CD4-positive, alpha-beta T cell (primary cell): ENCODE measurements at regions of chr13 and their contacts with region 1.

Region 1: DNA sequence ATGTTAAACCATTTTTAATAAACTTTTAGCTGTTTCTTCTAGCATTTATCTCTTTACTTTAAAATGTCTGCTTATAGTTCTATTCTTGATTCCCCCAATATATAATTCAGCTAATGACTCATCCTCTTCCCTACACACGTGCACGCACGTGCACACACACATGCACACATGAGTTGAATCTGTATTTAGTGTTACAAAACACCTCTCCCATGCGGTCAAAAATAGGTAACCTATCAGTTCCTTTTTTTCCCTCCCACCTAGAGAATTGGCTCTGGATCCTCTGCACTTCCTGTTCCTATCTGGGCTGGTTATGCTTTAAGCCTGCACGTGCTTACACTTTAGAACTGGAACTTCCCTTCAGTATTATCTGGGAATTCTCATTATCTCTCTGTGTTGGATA is 144.1 kb downstream of the PAN3 start:
- DNase-seq: no peak
- ATAC-seq: no peak
- H3K4me3 ChIP-seq: no peak overlapping the region
- H3K4me3 Mint-ChIP-seq: no peak overlapping the region
- H3K27ac ChIP-seq: no peak overlapping the region
- H3K27ac Mint-ChIP-seq: no peak overlapping the region
- H3K4me1 ChIP-seq: no peaks in the 10 kb centered on the region
- H3K4me1 Mint-ChIP-seq: no peaks in the 10 kb centered on the region
- H3K27me3 ChIP-seq: no peaks in the 10 kb centered on the region
- H3K27me3 Mint-ChIP-seq: no peaks in the 10 kb centered on the region
- CTCF ChIP-seq: no peak

Region 2: DNA sequence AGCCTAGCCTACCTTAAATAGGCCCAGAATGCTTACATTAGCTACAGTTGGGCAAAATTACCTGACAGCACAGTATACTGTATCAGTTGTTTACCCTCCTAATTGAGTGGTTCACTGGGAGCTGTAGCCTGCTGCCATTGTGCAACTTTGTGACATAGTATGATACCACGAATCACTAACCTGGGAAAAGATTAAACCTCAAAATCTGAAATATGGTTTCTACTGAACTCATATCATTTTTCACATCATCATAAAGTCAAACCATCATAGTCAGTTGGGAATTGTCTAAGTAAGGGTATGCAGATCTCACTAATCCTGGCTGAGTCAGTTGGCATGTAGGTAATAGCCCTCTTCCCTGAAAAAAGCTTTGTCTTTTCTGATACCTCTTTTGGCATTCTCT is 135.0 kb before region 1 on chr13:
- CTCF ChIA-PET with region 1: no interaction called
- POLR2A ChIA-PET with region 1: no interaction called
- intact Hi-C with region 1: loop called in 1 of 2 experiments (anchors 10 kb)
- DNase-seq: no peak
- ATAC-seq: no peak
- H3K4me3 ChIP-seq: no peak overlapping the region
- H3K4me3 Mint-ChIP-seq: no peak overlapping the region
- H3K27ac ChIP-seq: no peak overlapping the region
- H3K27ac Mint-ChIP-seq: no peak overlapping the region
- H3K4me1 ChIP-seq: peaks cover 32% of the 10 kb centered on the region
- H3K4me1 Mint-ChIP-seq: peaks cover 86% of the 10 kb centered on the region
- H3K27me3 ChIP-seq: no peaks in the 10 kb centered on the region
- H3K27me3 Mint-ChIP-seq: no peaks in the 10 kb centered on the region
- CTCF ChIP-seq: no peak